HCT116 (cell line): ENCODE measurements at regions of chr2 and their contacts with region 1.

Region 1: GRCh38 chr2:69914170-69914960 is 544 bp upstream of the MXD1 start:
- DNase-seq: peak; percentile 100
- ATAC-seq: peak; percentile 91
- H3K4me3 ChIP-seq: peak overlapping the region; percentile 55 to 79
- H3K27ac ChIP-seq: peak overlapping the region; percentile 81
- H3K4me1 ChIP-seq: peaks cover 0 to 18% of the 10 kb centered on the region in 2 experiments; a peak in 3 of 4 replicates
- H3K27me3 ChIP-seq: no peaks in the 10 kb centered on the region
- CTCF ChIP-seq: peak in 1 of 3 experiments; percentile 22; a peak in 1 of 6 replicates
- POLR2A ChIP-seq: no peak
- RAD21 ChIP-seq: peak; percentile 64

Region 2: DNA sequence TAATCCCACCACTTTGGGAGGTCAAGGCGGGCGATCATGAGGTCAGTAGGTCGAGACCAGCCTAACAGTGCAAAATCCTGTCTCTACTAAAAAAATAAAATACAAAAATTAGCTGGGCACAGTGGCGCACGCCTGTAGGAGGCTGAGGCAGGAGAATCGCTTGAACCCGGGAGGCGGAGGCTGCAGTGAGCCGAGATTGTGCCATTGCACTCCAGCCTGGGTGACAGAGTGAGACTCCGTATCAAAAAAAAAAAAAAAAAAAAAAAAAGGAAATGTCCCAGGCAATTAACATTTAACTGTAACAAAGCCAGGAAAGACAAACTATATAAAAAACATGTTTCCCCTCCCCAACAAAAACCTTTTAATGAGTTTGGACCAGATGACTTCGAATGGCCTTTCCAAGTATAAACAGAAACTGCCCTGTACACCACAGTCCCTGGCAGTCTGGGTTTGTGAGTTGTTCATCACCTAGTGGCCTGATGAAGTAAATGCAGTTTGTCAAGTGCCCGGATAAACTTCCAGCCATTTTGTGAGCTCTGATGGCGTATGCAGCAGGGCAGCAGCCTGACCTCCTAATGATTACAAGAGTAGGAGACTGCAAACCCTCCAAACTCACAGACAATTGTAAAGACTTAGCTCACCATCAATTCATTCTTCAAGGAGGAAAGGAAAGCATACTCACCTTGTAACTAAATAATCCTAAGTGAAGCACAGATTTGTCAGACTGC is 156.3 kb after region 1 on chr2:
- CTCF ChIA-PET with region 1: interaction called, 27 read pairs
- POLR2A ChIA-PET with region 1: interaction called, 13 read pairs
- RAD21 ChIA-PET with region 1: interaction called, 3 to 6 read pairs
- intact Hi-C with region 1: loop called (anchors 2 kb)
- DNase-seq: peak; percentile 69
- ATAC-seq: peak; percentile 99
- H3K4me3 ChIP-seq: no peak overlapping the region
- H3K27ac ChIP-seq: peak overlapping the region; percentile 65; the same call in 1 of the 2 replicates
- H3K4me1 ChIP-seq: peaks cover 5 to 8% of the 10 kb centered on the region in 2 experiments; a peak in 3 of 4 replicates
- H3K27me3 ChIP-seq: no peaks in the 10 kb centered on the region
- CTCF ChIP-seq: peak; percentile 73 to 82 (median 78)
- POLR2A ChIP-seq: no peak
- RAD21 ChIP-seq: peak; percentile 87

Region 3: DNA sequence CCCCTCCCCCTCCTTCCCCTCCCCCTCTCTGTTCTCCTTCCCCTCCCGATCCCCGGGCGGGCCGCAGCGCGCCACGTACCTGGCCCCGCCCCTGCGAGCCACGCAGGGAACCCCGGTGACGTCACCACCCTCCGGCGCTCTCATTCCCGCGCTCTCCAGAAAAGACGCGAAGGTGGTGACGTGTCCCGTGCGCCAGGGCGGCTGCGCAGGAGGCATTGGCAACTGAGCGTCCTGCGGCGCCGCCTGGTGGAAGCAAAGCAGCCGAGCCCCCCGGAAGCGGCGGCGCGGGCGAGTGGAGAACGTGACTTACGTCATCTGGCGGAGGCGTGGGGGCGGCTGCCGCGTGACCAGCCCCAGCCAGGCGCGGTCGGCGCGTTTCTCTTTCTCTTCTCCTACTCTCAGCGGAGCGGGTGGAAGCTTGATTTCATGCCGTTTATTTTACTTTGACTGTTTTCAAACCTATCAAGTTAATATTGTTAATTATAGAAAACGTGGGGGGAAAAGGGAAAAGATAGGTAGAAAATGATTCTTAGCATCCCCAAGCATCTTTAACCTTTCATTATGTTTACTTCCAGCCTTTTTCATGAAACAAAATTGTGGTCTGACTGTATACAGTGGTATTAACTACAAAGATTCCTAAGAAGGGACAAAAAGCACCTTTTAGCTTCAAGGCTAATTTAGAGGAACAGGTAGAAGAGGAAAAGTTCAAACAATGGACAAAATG is 228.4 kb after region 1 on chr2:
- CTCF ChIA-PET with region 1: interaction called, 24 read pairs
- POLR2A ChIA-PET with region 1: interaction called, 13 read pairs
- RAD21 ChIA-PET with region 1: interaction called in 1 of 2 experiments, 7 read pairs
- intact Hi-C with region 1: loop called (anchors 1 kb)
- DNase-seq: peak; percentile 98
- ATAC-seq: peak; percentile 74
- H3K4me3 ChIP-seq: peak overlapping the region; percentile 40 to 63
- H3K27ac ChIP-seq: peak overlapping the region; percentile 99
- H3K4me1 ChIP-seq: peaks cover 35 to 51% of the 10 kb centered on the region in 2 experiments
- H3K27me3 ChIP-seq: no peaks in the 10 kb centered on the region
- CTCF ChIP-seq: peak in 2 of 3 experiments; percentile 83 to 88; a peak in 4 of 6 replicates
- POLR2A ChIP-seq: peak; percentile 31
- RAD21 ChIP-seq: no peak

Region 4: DNA sequence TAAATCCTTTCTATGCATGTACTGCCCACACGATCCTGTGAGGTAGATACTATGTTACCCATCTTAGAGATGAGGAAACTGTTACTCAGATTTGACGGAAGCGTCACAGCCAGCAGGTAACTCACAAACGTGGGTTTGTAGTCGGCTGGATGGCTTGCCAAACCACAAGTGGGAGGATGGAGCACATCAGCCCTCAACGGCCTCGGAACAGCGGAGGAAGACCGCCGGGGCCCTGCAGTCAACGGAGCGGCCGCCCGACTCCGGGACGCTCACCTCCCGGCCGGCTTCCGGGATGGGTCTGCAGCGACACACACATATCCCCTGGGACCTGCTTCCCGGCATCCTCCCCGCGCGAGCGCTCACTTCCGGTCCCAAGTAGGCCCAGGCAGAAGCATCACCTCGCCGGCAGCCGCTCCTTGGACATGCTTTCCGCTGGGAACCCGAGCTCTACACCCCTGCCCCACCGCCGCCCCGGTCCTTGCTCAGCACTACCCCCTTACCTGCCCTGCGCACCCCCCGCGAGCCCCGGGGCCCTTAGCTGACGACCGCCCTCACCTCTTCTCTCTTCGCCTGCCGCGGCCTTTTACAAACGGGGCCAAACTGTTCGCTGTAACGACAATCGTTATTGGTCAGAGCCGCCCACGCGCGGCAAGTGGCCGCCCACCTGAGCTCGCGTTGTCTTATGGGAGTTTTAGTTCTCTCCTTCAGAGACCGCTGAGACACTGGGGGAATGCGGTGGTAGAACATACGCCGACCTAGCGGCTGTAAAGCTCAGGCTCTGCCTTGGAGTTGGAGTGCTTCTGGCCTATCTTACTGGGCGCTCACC is 276.3 kb after region 1 on chr2 and contains the start of gene C2orf42:
- CTCF ChIA-PET with region 1: interaction called, 6 read pairs
- POLR2A ChIA-PET with region 1: interaction called, 16 read pairs
- RAD21 ChIA-PET with region 1: no interaction called
- intact Hi-C with region 1: loop called (anchors 2 kb)
- DNase-seq: peak; percentile 97
- ATAC-seq: peak; percentile 91
- H3K4me3 ChIP-seq: peak within 1 kb of the TSS; percentile 79 to 87
- H3K27ac ChIP-seq: peak within 1 kb of the TSS; percentile 86
- H3K4me1 ChIP-seq: peaks cover 7 to 14% of the 10 kb centered on the region in 2 experiments; a peak in 3 of 4 replicates
- H3K27me3 ChIP-seq: no peaks in the 10 kb centered on the region
- CTCF ChIP-seq: no peak
- POLR2A ChIP-seq: peak; percentile 94
- RAD21 ChIP-seq: peak; percentile 10; the same call in 1 of the 2 replicates
- total RNA-seq, gene C2orf42: 17.4 TPM

Region 5: DNA sequence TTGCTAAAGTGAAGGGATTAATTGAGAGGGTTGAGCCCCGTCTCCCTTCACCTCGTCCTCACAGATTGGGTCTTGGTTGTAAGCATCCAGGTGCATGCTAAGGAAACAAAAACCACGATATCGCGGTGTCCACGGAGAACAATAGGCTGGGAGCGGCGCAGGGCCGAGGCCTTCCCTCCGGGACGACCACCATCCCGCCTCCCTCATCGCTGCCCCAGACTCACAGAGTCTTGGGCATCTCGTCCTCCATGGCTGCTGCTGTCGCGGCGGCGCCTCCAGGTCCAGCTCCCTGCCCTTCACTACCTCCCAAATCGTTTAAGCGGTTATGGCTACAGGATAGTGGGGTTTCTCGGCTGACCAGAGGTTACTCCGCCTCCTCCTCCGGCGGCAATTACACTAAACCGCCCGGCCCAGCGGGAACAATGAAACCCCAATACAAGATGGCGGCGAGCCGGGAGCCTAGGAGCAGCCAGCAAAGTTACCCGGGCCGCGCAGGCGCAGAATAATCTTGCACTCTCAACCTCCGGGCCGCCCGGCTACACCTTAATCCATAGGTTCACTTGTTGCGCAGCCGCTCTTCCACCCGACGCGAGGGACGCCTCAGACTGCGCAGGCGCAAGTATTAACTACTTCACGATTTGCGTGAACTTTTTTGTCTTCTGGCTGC is 333.9 kb after region 1 on chr2 and contains the start of gene TIA1:
- CTCF ChIA-PET with region 1: no interaction called
- POLR2A ChIA-PET with region 1: interaction called, 5 read pairs
- RAD21 ChIA-PET with region 1: no interaction called
- intact Hi-C with region 1: loop called (anchors 1 kb)
- DNase-seq: peak; percentile 96
- ATAC-seq: peak; percentile 94
- H3K4me3 ChIP-seq: peak within 1 kb of the TSS; percentile 85 to 94
- H3K27ac ChIP-seq: peak within 1 kb of the TSS; percentile 89
- H3K4me1 ChIP-seq: peaks cover 10 to 18% of the 10 kb centered on the region in 2 experiments; a peak in 3 of 4 replicates
- H3K27me3 ChIP-seq: no peaks in the 10 kb centered on the region
- CTCF ChIP-seq: no peak
- POLR2A ChIP-seq: peak; percentile 48
- RAD21 ChIP-seq: no peak
- total RNA-seq, gene TIA1: 94.1 TPM

Region 6: GRCh38 chr2:70647873-70648481 is 733.6 kb after region 1 on chr2:
- CTCF ChIA-PET with region 1: interaction called, 3 read pairs
- POLR2A ChIA-PET with region 1: no interaction called
- RAD21 ChIA-PET with region 1: no interaction called
- intact Hi-C with region 1: loop called (anchors 5 kb)
- DNase-seq: peak; percentile 55
- ATAC-seq: peak; percentile 87
- H3K4me3 ChIP-seq: no peak overlapping the region
- H3K27ac ChIP-seq: no peak overlapping the region
- H3K4me1 ChIP-seq: peaks cover 0 to 3% of the 10 kb centered on the region in 2 experiments; a peak in 1 of 4 replicates
- H3K27me3 ChIP-seq: no peaks in the 10 kb centered on the region
- CTCF ChIP-seq: peak; percentile 95 to 99 (median 99)
- POLR2A ChIP-seq: no peak
- RAD21 ChIP-seq: peak; percentile 99